ENCODE measurements at regions of chr3 and their contacts with region 1.

Region 1: DNA sequence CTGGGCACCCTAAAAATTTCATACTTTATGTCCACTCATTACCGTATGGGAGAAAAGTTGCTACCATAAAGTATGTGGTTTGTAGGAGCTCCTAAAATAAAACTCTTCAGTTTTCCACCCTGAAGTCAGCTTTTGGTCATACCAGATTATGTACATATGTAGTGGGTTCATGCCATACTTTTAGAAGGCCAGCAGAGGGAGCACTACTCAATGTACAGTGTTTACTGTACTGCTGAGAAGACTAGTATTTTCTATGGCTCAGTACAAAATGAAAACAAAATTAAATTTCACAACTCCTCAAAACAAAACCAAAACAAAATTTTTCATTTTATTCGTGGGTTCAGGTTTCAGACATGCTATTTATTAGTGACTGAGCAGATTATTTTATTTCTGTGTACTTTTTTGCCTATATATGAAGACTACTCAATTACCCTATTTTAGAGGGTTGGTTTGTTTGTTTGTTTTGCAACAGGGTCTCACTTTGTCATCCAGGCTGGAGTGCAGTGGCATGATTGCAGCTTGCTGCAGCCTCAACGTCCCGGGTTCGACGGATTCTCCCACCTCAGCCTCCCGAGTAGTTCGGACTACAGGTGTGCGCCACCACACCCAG is 24.3 kb downstream of the NXPE3 start:
- H3K4me3 ChIP-seq: no peak overlapping the region
- H3K27ac ChIP-seq: no peak overlapping the region
- H3K4me1 ChIP-seq: no peaks in the 10 kb centered on the region
- CTCF ChIP-seq: no peak

Region 2: DNA sequence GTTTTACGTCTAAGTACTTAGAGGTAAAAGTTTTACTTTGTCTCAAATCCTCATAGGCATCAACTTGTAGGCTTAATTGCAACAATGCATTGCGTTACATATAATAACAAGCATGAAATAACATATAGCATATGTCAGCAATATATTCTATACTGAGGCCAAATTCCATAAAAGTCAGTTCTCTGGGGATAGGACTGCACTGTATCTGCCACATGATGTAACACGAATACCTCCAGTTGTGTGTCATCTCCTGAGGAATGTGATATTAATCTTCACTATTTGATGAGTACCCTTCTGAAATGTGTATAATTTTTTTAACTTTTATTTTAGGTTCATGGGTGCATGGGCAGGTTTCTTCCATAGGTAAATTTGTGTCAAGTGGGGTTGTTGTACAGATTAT is 609.3 kb before region 1 on chr3:
- CTCF ChIA-PET with region 1: no interaction called
- POLR2A ChIA-PET with region 1: no interaction called
- H3K4me3 ChIP-seq: no peak overlapping the region
- H3K27ac ChIP-seq: no peak overlapping the region
- H3K4me1 ChIP-seq: no peaks in the 10 kb centered on the region
- CTCF ChIP-seq: no peak

Region 3: GRCh38 chr3:101625879-101626278 is 177.4 kb before region 1 on chr3:
- CTCF ChIA-PET with region 1: no interaction called
- POLR2A ChIA-PET with region 1: no interaction called
- H3K4me3 ChIP-seq: no peak overlapping the region
- H3K27ac ChIP-seq: no peak overlapping the region
- H3K4me1 ChIP-seq: no peaks in the 10 kb centered on the region
- CTCF ChIP-seq: no peak

Region 4: GRCh38 chr3:101827211-101828174 is 24.2 kb after region 1 on chr3:
- CTCF ChIA-PET with region 1: interaction called, 14 read pairs
- POLR2A ChIA-PET with region 1: interaction called, 3 read pairs
- H3K4me3 ChIP-seq: peak overlapping the region; percentile 38
- H3K27ac ChIP-seq: peak overlapping the region; percentile 56; the same call in 1 of the 2 replicates
- H3K4me1 ChIP-seq: no peaks in the 10 kb centered on the region
- CTCF ChIP-seq: no peak